OCI-LY7 (cell line): ENCODE measurements at regions of chr12 and their contacts with region 1.

Region 1: GRCh38 chr12:120904197-120904773 is at the start of gene SPPL3:
- DNase-seq: peak; percentile 95
- H3K4me3 ChIP-seq: peak within 1 kb of the TSS; percentile 86
- H3K27ac ChIP-seq: peak within 1 kb of the TSS; percentile 63
- H3K4me1 ChIP-seq: peaks cover 27% of the 10 kb centered on the region
- CTCF ChIP-seq: no peak
- total RNA-seq, gene SPPL3: 5.5 and 8.6 TPM in 2 replicates

Region 2: GRCh38 chr12:120761519-120761934 is 142.8 kb before region 1 on chr12:
- CTCF ChIA-PET with region 1: no interaction called
- POLR2A ChIA-PET with region 1: no interaction called
- intact Hi-C with region 1: loop called (anchors 10 kb)
- DNase-seq: no peak
- H3K4me3 ChIP-seq: no peak overlapping the region
- H3K27ac ChIP-seq: no peak overlapping the region
- H3K4me1 ChIP-seq: peaks cover 42% of the 10 kb centered on the region
- CTCF ChIP-seq: no peak

Region 3: DNA sequence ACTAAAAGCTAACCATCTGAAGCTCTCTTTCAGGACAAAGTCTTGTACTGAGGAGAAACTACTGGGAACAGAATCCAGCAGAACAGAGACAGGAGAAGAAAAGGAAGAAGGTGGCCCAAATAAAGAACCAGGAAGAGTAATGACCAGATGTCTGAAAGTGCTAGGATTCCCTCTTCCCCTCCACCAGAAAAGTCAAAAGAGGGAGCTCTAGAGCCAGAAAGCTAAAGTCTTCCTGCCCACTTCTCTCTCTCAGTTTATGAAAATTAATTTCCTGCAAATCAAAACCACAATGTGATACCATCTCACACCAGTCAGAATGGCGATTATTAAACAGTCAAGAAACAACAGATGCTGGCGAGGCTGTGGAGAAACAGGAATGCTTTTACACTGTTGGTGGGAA is 47.3 kb before region 1 on chr12:
- CTCF ChIA-PET with region 1: interaction called, 3 read pairs
- POLR2A ChIA-PET with region 1: interaction called, 4 read pairs
- intact Hi-C with region 1: loop called (anchors 5 kb)
- DNase-seq: peak; percentile 58
- H3K4me3 ChIP-seq: peak overlapping the region; percentile 11
- H3K27ac ChIP-seq: peak overlapping the region; percentile 33
- H3K4me1 ChIP-seq: peaks cover 46% of the 10 kb centered on the region
- CTCF ChIP-seq: peak; percentile 81

Region 4: GRCh38 chr12:120885526-120885925 is 18.8 kb before region 1 on chr12:
- CTCF ChIA-PET with region 1: interaction called, 3 read pairs
- POLR2A ChIA-PET with region 1: interaction called, 9 read pairs
- intact Hi-C with region 1: loop called (anchors 2 kb)
- DNase-seq: no peak
- H3K4me3 ChIP-seq: no peak overlapping the region
- H3K27ac ChIP-seq: no peak overlapping the region
- H3K4me1 ChIP-seq: peaks cover 24% of the 10 kb centered on the region
- CTCF ChIP-seq: no peak